ENCODE measurements at regions of chr2 and their contacts with region 1.

Region 1: GRCh38 chr2:167733747-167734146 is 513.6 kb downstream of the STK39 start:
- DNase-seq: no peak
- H3K4me3 Mint-ChIP-seq: no peak overlapping the region
- H3K27ac Mint-ChIP-seq: no peak overlapping the region
- H3K4me1 Mint-ChIP-seq: no peaks in the 10 kb centered on the region
- H3K27me3 Mint-ChIP-seq: no peaks in the 10 kb centered on the region

Region 2: DNA sequence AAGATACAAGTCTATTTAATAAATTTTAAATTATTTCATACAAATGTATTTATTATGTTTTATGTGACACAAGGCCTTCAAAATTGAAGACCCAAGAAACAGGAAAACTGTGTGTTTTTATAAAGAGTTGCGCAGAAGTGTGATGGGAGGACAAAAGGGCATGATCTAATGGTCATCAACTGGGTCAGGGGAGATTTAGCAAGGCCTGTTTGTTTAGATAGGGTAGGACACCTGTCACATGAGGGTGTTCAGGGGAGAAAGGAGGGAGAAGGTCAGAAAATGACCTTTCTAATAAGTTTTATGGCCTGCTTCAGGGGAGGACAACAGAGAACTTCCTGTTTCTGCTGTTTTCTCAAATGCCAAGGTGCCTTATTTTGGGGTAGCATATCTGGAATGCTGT is 15.2 kb before region 1 on chr2:
- intact Hi-C with region 1: loop called (anchors 1 kb)
- DNase-seq: no peak
- H3K4me3 Mint-ChIP-seq: no peak overlapping the region
- H3K27ac Mint-ChIP-seq: no peak overlapping the region
- H3K4me1 Mint-ChIP-seq: no peaks in the 10 kb centered on the region
- H3K27me3 Mint-ChIP-seq: no peaks in the 10 kb centered on the region

Measured in activated T-helper 1 cell treated with anti-CD3 and anti-CD28 coated beads, Interleukin-12 subunit alpha, Interleukin-12 subunit beta, Interleukin-2, Interleukin-4 antibody, amounts not matched to agents 30 ng/mL and 10 ng/mL and 1 ng/mL, durations not matched to agents 14 hours and 24 hours and 36 hours (primary cell).